Right ventricle myocardium inferior (tissue), 1 donor: ENCODE measurements at regions of chr4 and their contacts with region 1.

Region 1: GRCh38 chr4:183074296-183074990 is 24.6 kb upstream of the WWC2 start:
- DNase-seq: no peak
- ATAC-seq: no peak

Region 2: DNA sequence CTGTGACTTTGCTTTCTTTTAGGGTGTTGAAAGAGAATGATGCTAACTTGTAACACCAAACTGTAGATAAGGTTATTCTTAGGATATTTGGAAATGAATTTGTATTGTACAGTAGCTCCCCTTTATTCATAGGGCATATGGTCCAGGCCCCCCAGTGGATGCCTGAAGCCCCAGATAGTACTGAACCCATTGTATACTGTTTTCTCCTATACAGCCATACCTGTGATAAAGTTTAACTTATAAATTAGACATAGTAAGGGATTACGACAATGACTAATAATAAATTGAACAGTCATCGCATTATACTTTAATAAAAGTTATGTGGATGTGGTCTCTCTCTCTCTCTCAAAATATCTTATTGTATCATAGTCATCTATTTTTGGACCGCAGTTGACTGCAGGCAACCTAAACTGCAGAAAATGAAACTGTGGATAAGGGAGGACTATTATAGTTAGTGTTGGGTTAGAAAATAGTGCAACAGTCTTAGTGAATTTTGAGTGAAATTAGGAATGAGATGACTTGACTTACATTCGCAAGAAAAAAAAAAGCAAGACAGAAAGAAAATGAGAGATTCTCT is 140.6 kb after region 1 on chr4:
- intact Hi-C with region 1: no loop called
- DNase-seq: no peak
- ATAC-seq: no peak

Region 3: DNA sequence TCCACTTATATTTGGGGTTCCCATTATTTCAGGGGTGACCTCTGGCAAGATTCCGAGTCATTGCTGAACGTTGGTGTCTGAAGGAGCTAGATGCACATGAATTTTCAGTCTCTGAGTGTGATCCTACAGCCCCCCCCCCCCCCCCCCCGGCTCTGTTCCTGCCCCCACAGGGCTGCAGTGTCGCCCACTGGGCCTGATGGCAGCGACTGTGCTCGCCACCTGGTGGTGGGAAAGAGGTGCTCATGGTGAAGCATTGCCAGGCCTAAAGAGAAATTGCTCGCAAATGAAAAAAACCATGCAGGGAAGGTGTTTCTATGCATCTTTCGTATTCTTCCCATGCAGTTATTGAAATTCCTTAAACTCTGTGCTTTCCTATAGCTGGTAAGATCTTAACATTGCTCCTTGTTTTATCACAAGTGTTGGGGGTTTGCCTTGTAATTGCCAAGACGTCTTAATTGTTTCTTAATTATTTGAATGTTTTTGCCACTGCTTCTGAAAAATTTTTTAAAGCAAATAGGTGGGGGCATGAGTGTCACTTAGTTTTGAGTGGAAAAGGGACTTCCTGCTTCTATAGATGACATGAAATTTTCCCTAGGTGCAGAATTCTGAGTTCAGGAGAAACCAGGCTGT is 182.4 kb after region 1 on chr4:
- intact Hi-C with region 1: loop called (anchors 1 kb)
- DNase-seq: no peak
- ATAC-seq: peak; percentile 68

Region 4: DNA sequence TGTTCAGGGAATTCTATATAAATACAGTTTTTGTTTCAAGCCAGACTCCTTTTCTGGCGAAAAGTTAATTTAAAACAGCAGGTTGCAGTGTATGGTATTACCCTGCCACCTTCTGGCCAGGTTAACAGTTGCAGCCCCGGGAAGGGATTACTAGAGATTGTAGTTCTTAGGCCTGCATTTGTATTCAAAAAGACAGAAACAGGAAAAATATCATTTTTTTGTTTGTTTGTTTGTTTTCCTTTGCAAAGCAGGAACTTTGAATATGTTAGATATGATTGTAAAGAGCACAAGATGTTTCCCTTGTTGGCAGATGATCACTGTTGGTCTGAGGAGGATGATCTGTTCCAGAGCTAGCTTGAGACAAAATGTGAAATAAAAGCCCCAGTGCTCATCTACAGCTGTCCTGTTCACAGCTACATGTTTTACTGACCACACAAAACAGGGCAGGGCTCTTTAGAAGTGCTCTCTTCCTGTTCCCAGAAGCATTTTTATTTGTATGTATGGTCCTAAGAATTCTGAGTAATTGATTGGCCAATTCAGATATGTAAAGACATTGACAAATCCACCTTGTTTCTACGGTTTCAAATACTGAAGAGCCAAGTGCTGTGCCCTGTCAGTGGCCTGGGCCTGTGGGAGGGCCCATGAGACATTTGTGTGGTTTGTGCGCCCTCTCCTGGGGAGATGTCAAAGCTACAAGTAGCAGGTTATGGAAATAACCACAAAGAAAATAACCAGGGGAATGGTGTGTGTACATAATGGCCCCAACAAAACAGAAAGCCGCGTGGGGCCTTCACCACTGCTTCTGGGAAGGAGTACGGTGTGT is 187.7 kb after region 1 on chr4:
- intact Hi-C with region 1: loop called (anchors 1 kb)
- DNase-seq: peak; percentile 87
- ATAC-seq: peak; percentile 93